ENCODE measurements at regions of chr6 and their contacts with region 1.

Region 1: GRCh38 chr6:25278914-25279747 is at the start of gene CARMIL1:
- DNase-seq: peak; percentile 87
- H3K4me3 ChIP-seq: peak within 1 kb of the TSS; percentile 55 to 71 (median 66)
- H3K27ac ChIP-seq: peak within 1 kb of the TSS; percentile 16 to 66 (median 58)
- H3K4me1 ChIP-seq: peaks cover 0 to 25% (median 20%) of the 10 kb centered on the region in 4 donors
- H3K27me3 ChIP-seq: peaks cover 0 to 12% (median 0%) of the 10 kb centered on the region in 3 donors
- CTCF ChIP-seq: peak; percentile 17 to 62 (median 46)
- EP300 ChIP-seq: no peak
- POLR2A ChIP-seq: peak in 1 of 2 donors; percentile 16
- total RNA-seq, gene CARMIL1: 3.4 to 8.2 (median 7.4) TPM

Region 2: GRCh38 chr6:25490018-25490801 is 211.1 kb after region 1 on chr6:
- intact Hi-C with region 1: loop called (anchors 2 kb)
- DNase-seq: peak; percentile 80
- H3K4me3 ChIP-seq: no peak overlapping the region
- H3K27ac ChIP-seq: no peak overlapping the region
- H3K4me1 ChIP-seq: no peaks in the 10 kb centered on the region
- H3K27me3 ChIP-seq: no peaks in the 10 kb centered on the region
- CTCF ChIP-seq: peak in 3 of 4 experiments; percentile 38 to 67 (median 52)
- EP300 ChIP-seq: no peak
- POLR2A ChIP-seq: no peak

Region 3: DNA sequence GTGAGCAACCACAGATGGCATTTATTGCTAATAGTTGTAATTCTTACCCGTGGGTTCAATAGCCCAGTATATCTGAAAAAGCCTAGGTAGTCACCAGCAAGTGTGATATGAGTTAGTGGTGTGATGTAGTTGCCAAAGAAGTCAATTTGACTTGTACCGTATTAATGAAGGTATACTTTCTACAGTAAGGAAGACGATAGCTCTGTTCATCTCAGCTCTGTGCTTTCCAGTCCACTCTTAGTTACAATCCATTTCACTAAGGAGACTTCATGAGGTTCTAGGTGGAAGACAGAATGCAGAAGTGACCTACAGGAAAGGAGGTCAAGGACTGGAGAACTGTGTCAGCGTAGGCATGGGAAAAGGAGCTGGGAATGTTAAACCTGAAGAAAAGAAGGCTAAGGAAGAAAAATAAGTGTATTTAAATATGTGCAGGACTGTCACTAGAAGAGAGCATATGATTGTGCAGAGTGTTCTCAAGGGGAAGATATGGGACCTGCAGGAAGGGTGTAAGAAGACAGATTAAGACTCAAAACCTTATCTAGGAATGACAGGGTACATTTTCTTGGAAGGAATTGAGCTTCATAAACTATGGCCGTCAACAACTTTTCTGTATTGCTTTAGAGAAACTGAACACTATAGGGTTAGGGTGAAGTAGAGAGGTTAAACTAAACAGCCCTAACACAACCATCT is 256.0 kb after region 1 on chr6:
- intact Hi-C with region 1: no loop called
- DNase-seq: no peak
- H3K4me3 ChIP-seq: no peak overlapping the region
- H3K27ac ChIP-seq: no peak overlapping the region
- H3K4me1 ChIP-seq: no peaks in the 10 kb centered on the region
- H3K27me3 ChIP-seq: no peaks in the 10 kb centered on the region
- CTCF ChIP-seq: no peak
- EP300 ChIP-seq: no peak
- POLR2A ChIP-seq: no peak